ENCODE measurements at regions of chr15 and their contacts with region 1.

Region 1: GRCh38 chr15:34342737-34343575 is at the starts of genes NOP10 and NUTM1:
- DNase-seq: peak; percentile 78
- H3K4me3 Mint-ChIP-seq: no peak within 1 kb of the TSS
- H3K27ac Mint-ChIP-seq: no peak within 1 kb of the TSS
- H3K4me1 Mint-ChIP-seq: no peaks in the 10 kb centered on the region
- H3K27me3 Mint-ChIP-seq: no peaks in the 10 kb centered on the region
- CTCF ChIP-seq: peak; percentile 52
- total RNA-seq, gene NOP10: 46.0 and 48.1 TPM in 2 replicates
- total RNA-seq, gene NUTM1: not detected in 2 replicates

Region 2: GRCh38 chr15:34367101-34368081 is 24.4 kb after region 1 on chr15 and contains the start of gene LPCAT4:
- CTCF ChIA-PET with region 1: interaction called, 3 read pairs
- intact Hi-C with region 1: loop called (anchors 2 kb)
- DNase-seq: peak; percentile 68
- H3K4me3 Mint-ChIP-seq: peak within 1 kb of the TSS; percentile 87
- H3K27ac Mint-ChIP-seq: no peak within 1 kb of the TSS
- H3K4me1 Mint-ChIP-seq: peaks cover 8% of the 10 kb centered on the region
- H3K27me3 Mint-ChIP-seq: no peaks in the 10 kb centered on the region
- CTCF ChIP-seq: no peak
- total RNA-seq, gene LPCAT4: 28.9 and 35.3 TPM in 2 replicates